Ovary (tissue), 10 donors: ENCODE measurements at regions of chr11 and their contacts with region 1.

Region 1: DNA sequence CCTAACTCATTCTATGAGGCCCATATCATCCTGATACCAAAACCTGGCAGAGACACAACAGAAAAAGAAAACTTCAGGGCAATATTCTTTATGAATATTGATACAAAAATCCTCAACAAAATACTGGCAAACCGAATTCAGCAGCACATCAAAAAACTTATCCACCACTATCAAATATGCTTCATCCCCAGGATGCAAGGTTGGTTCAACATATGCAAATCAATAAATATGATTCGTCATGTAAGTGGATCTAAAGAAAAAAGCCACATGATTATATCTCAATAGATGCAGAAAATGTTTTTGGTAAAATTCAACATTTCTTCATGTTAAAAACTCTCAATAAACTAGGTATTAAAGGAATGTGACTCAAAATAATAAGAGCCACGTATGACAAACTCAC is 40.9 kb downstream of the JRKL start:
- DNase-seq: no peak
- H3K4me3 ChIP-seq: no peak overlapping the region
- H3K27ac ChIP-seq: no peak overlapping the region
- H3K4me1 ChIP-seq: no peaks in the 10 kb centered on the region
- H3K27me3 ChIP-seq: no peaks in the 10 kb centered on the region
- CTCF ChIP-seq: no peak
- EP300 ChIP-seq: no peak
- POLR2A ChIP-seq: no peak

Region 2: DNA sequence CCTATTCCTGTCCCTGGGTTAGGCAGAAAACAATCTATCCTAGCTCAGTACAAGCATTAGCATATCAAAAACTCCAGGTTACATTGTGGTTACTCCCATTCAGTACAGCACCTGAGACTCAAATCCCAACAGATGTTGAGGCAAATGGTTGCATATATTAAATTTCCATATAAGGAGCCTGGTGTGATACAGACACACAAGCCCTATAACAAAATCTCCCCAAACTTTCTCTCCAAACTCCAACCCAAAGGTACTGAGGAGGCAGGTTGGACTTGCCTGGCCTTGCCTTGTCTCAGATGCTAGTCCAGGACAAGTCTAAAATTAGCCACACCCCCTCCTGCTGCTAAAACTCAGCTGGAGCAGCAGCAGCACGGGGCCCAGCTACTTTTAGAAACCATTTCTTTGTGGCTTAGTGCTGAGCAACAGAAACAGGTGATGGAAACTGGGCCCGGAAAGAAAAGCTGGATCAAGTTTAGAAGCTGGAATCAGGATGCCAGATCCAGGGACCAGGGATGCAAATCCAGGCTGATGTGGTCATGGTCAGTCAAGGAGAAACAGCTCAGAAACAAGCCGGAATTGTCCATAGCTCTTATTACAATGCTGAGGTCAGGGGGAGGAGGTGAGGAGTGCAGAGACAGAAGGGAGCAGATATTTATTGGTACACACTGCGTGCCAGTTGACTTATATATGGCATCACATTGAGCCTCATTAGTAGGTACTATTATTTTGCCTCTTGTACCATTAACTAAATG is 1736.2 kb before region 1 on chr11:
- intact Hi-C with region 1: loop called in 1 of 4 experiments (anchors 10 kb)
- DNase-seq: no peak
- H3K4me3 ChIP-seq: no peak overlapping the region
- H3K27ac ChIP-seq: no peak overlapping the region
- H3K4me1 ChIP-seq: no peaks in the 10 kb centered on the region
- H3K27me3 ChIP-seq: no peaks in the 10 kb centered on the region
- CTCF ChIP-seq: no peak
- EP300 ChIP-seq: no peak
- POLR2A ChIP-seq: no peak

Region 3: DNA sequence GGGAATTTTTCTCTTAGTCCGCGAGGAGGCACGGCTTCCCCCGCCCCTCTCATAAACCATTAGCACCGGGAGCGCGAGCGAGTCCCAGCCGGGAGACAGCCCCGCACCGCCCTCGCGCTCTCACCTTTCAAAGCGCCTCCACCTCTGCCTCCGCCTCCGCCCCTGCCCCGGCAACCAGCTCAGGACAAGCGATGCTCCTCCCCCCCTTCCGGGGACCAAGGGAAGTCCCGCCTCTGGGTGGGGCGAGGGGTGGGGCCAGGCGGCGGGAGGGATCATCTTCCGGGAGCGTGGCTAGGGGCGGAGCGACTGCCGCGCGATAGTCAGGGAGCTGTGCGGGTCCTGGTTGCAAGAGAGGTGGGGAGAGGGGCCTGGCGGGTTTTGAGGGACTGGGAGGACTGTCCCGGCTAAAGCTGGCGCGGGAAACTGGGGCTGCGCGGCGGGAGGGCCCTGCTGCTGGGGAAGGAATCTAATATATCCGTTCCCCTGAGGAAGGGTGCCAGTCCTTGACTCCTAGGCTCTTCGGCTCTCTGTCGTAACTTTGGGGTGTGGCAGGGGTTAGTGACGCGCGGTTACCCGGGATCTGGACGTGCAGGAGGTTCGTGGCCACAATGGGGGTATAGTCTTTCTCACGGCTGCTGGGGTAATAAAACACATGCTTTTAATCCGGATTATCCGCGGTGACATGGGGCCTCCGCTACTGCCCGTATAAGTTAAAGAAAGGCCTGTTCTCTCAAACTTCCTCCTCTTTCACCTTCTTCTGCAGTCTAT is 40.8 kb before region 1 on chr11 and contains the starts of genes CCDC82 and JRKL:
- intact Hi-C with region 1: no loop called
- DNase-seq: peak; percentile 95 to 98 (median 97)
- H3K4me3 ChIP-seq: peak within 1 kb of the TSS; percentile 93
- H3K27ac ChIP-seq: peak within 1 kb of the TSS; percentile 30 to 73
- H3K4me1 ChIP-seq: peaks cover 2% of the 10 kb centered on the region
- H3K27me3 ChIP-seq: no peaks in the 10 kb centered on the region
- CTCF ChIP-seq: no peak
- EP300 ChIP-seq: no peak
- POLR2A ChIP-seq: no peak
- total RNA-seq, gene CCDC82: 14.8 to 31.8 (median 23.0) TPM
- total RNA-seq, gene JRKL: 7.1 to 18.8 (median 11.7) TPM